Activated T-helper 1 cell treated with anti-CD3 and anti-CD28 coated beads, Interleukin-12 subunit alpha, Interleukin-12 subunit beta, Interleukin-2, Interleukin-4 antibody, amounts not matched to agents 30 ng/mL and 10 ng/mL and 1 ng/mL, durations not matched to agents 14 hours and 24 hours and 36 hours (primary cell): ENCODE measurements at regions of chr6 and their contacts with region 1.

Region 1: DNA sequence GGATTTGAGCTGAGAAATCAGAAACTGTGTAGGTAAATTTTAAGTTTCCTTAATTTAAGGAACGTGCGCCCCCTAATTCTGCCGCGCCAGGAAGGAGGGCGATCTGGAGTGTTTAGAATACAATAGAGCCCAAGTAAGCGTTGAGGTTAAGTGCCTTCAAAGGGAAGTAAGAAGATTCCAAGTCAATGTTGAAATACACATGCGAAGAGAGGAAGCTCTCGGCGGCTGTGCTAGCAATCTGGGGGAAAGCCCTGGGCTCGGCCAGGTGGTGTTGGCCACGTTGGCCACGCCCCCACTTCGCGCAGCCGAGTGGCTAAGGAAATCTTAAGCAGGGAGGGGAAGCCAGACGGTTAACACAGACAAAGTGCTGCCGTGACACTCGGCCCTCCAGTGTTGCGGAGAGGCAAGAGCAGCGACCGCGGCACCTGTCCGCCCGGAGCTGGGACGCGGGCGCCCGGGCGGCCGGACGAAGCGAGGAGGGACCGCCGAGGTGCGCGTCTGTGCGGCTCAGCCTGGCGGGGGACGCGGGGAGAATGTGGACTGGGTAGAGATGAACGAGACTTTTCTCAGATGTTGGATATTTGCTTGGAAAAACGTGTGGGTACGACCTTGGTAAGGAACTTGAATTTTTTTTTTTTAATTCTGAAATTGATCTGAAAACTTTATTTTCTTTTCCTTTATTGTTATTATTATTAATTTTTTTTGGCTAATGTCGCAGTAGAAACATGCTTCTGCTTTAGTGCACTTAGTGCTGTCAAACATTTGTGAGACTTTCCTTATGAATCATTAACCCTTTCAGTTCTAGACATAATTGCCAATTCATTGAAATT is at the start of gene PRDM1:
- DNase-seq: peak; percentile 83
- H3K4me3 Mint-ChIP-seq: peak within 1 kb of the TSS; percentile 96
- H3K27ac Mint-ChIP-seq: peak within 1 kb of the TSS; percentile 80
- H3K4me1 Mint-ChIP-seq: peaks cover 86% of the 10 kb centered on the region
- H3K27me3 Mint-ChIP-seq: peaks cover 7% of the 10 kb centered on the region
- total RNA-seq, gene PRDM1: 74.1 and 78.8 TPM in 2 replicates

Region 2: DNA sequence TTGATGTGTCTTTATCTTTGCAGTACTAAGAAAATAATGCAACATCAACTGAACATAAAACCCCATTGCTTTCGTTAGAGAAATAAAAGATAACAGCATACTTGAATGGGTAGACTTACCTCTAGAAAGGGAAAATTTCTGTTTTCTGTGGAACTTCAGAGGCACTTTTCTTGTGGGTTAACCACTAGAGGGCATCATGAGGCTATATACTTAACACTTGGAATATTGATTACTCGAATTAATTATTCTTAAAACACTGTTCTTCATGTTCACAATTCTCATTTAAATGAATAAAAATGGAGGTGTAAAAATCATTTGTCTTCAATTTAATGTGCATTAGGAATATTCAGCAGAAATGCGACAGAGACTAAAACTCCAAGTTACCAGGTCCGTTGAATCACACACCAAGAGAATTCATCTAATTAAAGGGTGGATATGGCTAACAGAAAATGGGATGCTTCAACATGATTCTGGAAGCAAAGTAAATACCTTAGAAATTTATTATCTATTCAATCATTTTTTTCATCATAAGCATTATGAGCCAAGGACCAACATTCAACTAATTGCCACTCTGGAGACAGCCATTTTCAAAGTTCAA is 352.5 kb before region 1 on chr6:
- intact Hi-C with region 1: loop called (anchors 1 kb)
- DNase-seq: no peak
- H3K4me3 Mint-ChIP-seq: no peak overlapping the region
- H3K27ac Mint-ChIP-seq: no peak overlapping the region
- H3K4me1 Mint-ChIP-seq: peaks cover 44% of the 10 kb centered on the region
- H3K27me3 Mint-ChIP-seq: peaks cover 3% of the 10 kb centered on the region

Region 3: DNA sequence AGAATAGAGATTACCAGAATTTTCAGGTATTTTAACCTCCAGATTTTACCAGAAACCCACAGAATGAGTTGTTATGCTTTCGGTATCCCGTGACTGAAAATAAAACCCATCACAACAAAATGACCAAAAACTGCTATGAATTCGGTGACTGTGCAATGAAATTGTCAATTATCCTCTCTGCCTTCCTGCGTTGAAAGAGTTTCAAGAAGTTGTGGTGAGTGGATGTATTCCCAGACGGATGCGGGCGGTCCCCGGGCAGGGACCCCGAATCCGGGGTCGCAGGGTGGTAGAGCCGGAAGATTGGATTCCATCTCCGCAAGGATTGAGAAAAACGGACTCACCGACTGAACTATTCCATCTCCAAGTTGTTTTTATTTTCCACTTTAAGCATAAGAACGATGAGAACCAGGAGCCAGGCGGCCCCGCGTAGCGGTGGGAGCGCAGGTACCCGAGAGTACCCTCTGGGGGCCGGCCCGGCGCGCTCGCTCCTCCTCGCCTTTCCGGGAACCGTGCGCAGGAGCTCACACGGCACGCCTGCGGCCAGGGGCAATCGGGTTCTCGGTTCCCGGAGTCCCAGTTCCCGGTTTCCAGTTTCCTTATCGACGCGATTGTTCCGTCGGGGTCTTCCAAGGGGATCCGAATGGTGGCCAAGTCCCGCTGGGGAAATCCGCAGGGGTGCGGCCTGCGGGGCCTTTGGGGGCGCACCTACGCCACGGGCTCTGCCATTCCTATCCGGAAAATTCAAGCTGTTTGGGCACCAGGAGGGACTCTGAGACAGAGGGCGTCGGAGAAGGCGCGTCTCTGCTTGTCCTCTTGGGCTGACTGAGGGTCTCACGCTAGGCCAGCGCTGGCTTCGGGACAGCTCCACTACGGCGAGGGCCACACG is 105.0 kb before region 1 on chr6:
- intact Hi-C with region 1: loop called (anchors 1 kb)
- DNase-seq: peak; percentile 48
- H3K4me3 Mint-ChIP-seq: peak overlapping the region; percentile 84
- H3K27ac Mint-ChIP-seq: peak overlapping the region; percentile 91
- H3K4me1 Mint-ChIP-seq: peaks cover 79% of the 10 kb centered on the region
- H3K27me3 Mint-ChIP-seq: no peaks in the 10 kb centered on the region

Region 4: GRCh38 chr6:106114492-106115265 is 28.5 kb after region 1 on chr6:
- intact Hi-C with region 1: loop called (anchors 1 kb)
- DNase-seq: peak; percentile 47
- H3K4me3 Mint-ChIP-seq: peak overlapping the region; percentile 58
- H3K27ac Mint-ChIP-seq: peak overlapping the region; percentile 82
- H3K4me1 Mint-ChIP-seq: peaks cover 93% of the 10 kb centered on the region
- H3K27me3 Mint-ChIP-seq: peaks cover 2% of the 10 kb centered on the region